ENCODE measurements at regions of chr11 and their contacts with region 1.

Region 1: DNA sequence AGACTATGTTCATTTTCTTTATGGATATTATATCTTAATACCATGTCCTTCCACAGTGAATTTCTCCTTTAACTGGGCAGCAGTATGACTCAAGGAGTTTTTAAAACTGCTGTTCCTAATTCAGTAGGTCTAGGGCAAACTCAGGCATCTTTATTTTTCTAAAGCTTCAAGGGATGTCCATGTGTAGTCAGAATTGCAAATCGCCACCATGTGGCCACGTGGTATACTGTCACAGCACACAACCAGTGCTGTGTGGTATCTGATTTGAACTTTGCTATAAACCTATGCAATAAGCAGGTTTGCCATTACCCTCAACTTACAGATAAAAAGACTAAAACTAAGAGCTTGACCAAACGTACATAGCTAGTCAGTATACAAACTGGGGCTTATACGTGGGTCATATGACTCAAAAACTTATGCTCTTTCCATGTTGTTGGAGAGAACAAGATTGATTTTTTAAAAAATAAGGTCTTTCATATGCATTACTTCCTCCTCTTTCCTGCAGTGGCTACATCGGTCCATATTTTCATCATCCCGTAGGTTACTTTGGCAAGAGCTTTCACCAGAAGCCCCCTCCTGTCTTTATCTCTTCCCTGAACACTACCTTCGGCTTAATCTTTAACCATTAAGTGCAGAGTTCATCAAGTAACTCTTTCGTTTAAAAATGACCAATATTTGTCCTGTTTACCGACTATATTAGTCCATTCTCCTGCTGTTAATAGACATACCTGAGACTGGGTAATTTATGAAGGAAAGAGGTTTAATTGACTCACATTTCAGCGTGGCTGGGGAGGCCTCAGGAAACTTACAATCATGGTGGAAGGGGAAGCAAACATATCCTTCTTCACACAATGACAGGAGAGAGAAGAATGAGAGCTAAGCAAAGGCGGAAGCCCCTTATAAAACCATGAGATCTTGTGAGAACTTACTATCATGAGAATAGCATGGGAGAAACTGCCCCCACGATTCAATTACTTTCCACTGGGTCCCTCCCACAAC is 8.0 kb upstream of the HTATIP2 start:
- DNase-seq: no peak
- H3K4me3 ChIP-seq: no peak overlapping the region
- H3K27ac ChIP-seq: no peak overlapping the region
- H3K4me1 ChIP-seq: no peaks in the 10 kb centered on the region
- H3K27me3 ChIP-seq: no peaks in the 10 kb centered on the region
- CTCF ChIP-seq: peak; percentile 36 to 69 (median 53)
- EP300 ChIP-seq: no peak
- POLR2A ChIP-seq: no peak
- RAD21 ChIP-seq: peak; percentile 49 to 54

Region 2: GRCh38 chr11:20110908-20111669 is 244.4 kb before region 1 on chr11:
- CTCF ChIA-PET with region 1: interaction called, 14 read pairs
- POLR2A ChIA-PET with region 1: no interaction called
- DNase-seq: peak in 1 of 2 experiments; percentile 76
- H3K4me3 ChIP-seq: no peak overlapping the region
- H3K27ac ChIP-seq: no peak overlapping the region; the same call in 1 of the 2 replicates
- H3K4me1 ChIP-seq: no peaks in the 10 kb centered on the region
- H3K27me3 ChIP-seq: no peaks in the 10 kb centered on the region
- CTCF ChIP-seq: peak; percentile 85 to 99 (median 94)
- EP300 ChIP-seq: no peak
- POLR2A ChIP-seq: no peak
- RAD21 ChIP-seq: peak; percentile 83 to 88

Region 3: GRCh38 chr11:20156280-20156875 is 199.1 kb before region 1 on chr11:
- CTCF ChIA-PET with region 1: interaction called, 33 read pairs
- POLR2A ChIA-PET with region 1: no interaction called
- DNase-seq: peak in 1 of 2 experiments; percentile 87
- H3K4me3 ChIP-seq: peak overlapping the region; percentile 50 to 76 (median 57)
- H3K27ac ChIP-seq: no peak overlapping the region
- H3K4me1 ChIP-seq: peaks cover 8 to 42% (median 20%) of the 10 kb centered on the region in 4 experiments
- H3K27me3 ChIP-seq: peaks cover 41 to 69% (median 66%) of the 10 kb centered on the region in 4 experiments
- CTCF ChIP-seq: no peak
- EP300 ChIP-seq: no peak
- POLR2A ChIP-seq: no peak
- RAD21 ChIP-seq: no peak

Region 4: DNA sequence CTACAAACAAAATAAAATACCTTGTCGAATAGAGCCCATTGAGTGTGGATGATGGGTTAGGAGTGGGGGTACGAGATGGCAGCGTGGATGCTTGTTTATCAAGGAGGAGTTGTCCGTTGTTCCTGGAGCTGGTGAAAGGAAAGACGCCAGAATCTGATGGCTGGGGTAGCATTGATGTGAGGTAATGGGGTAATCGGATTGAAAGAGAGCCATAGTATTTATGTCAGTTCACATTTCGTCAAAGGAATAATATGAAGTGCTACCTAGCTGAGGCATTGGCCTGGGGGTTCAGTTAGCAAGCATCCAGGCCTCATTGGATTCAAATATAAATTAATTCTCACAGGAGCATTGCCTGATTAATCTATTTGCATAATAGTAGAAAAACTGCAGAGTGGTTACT is 178.4 kb before region 1 on chr11:
- CTCF ChIA-PET with region 1: interaction called, 13 read pairs
- POLR2A ChIA-PET with region 1: no interaction called
- DNase-seq: no peak
- H3K4me3 ChIP-seq: no peak overlapping the region
- H3K27ac ChIP-seq: no peak overlapping the region
- H3K4me1 ChIP-seq: no peaks in the 10 kb centered on the region
- H3K27me3 ChIP-seq: no peaks in the 10 kb centered on the region; a peak in 3 of 7 replicates
- CTCF ChIP-seq: no peak
- EP300 ChIP-seq: no peak
- POLR2A ChIP-seq: no peak
- RAD21 ChIP-seq: no peak

Region 5: DNA sequence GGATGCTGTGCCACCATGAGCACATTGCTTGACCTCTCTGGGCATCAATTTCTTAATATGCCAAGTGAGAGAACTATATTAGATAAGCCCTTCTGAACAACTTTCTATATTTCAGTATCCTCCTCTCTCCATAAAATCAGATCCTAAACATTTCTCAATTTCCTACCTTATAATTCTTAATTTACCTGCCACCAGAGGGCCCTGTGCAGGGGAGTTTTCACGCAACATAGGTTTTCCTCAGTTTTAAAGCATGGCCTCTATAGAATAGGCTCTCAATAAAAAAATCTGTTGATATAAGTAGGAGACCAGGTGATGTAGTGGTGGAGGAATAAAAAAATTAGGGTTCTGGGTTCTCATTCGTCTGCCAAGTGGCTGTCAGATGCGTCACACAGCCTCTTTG is 111.5 kb before region 1 on chr11:
- CTCF ChIA-PET with region 1: interaction called, 15 read pairs
- POLR2A ChIA-PET with region 1: no interaction called
- DNase-seq: no peak
- H3K4me3 ChIP-seq: no peak overlapping the region
- H3K27ac ChIP-seq: no peak overlapping the region
- H3K4me1 ChIP-seq: peaks cover 2 to 8% (median 5%) of the 10 kb centered on the region in 4 experiments; a peak in 4 of 7 replicates
- H3K27me3 ChIP-seq: peaks cover 0 to 1% (median 0%) of the 10 kb centered on the region in 4 experiments; a peak in 2 of 7 replicates
- CTCF ChIP-seq: peak in 2 of 3 experiments; percentile 43 to 48; a peak in 2 of 4 replicates
- EP300 ChIP-seq: no peak
- POLR2A ChIP-seq: no peak
- RAD21 ChIP-seq: peak; percentile 39 to 41

Region 6: DNA sequence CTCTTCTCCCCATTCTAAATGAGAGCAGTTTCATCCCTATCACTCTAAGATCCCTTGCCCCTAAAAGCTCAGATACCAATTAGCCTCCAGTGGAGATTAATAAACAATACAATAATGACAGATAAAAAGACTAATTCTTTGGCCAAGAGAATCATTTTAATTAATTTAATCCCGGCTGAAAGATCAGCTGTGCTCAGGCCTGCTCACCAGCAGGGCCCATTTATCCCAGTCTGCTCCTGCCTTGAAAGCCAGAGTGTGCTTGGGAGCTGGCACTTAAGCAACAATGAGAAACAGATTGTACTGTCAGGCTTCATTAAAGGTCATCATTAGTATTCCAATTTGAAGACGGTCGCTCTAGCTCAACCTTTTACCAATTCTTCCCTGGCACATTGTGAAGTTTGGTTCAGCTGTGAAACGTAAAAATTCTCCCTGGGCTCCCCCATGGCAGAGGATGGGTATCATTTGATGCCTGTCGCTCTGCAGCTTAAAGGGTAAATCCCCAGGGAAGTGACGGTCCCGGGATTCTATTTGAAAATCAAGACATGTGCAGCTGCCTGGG is 28.1 kb before region 1 on chr11:
- CTCF ChIA-PET with region 1: interaction called, 16 read pairs
- POLR2A ChIA-PET with region 1: no interaction called
- DNase-seq: no peak
- H3K4me3 ChIP-seq: no peak overlapping the region
- H3K27ac ChIP-seq: no peak overlapping the region
- H3K4me1 ChIP-seq: no peaks in the 10 kb centered on the region
- H3K27me3 ChIP-seq: no peaks in the 10 kb centered on the region
- CTCF ChIP-seq: no peak
- EP300 ChIP-seq: no peak
- POLR2A ChIP-seq: no peak
- RAD21 ChIP-seq: no peak

Measured in H1 (cell line).